WTC11 (cell line): ENCODE measurements at regions of chr7 and their contacts with region 1.

Region 1: GRCh38 chr7:91940572-91941341 is at the start of gene AKAP9:
- DNase-seq: peak; percentile 85
- ATAC-seq: peak; percentile 93
- H3K4me3 Mint-ChIP-seq: peak within 1 kb of the TSS; percentile 85
- H3K27ac Mint-ChIP-seq: peak within 1 kb of the TSS; percentile 97
- H3K4me1 Mint-ChIP-seq: peaks cover 15% of the 10 kb centered on the region
- H3K27me3 Mint-ChIP-seq: peaks cover 41% of the 10 kb centered on the region
- CTCF ChIP-seq: no peak
- total RNA-seq, gene AKAP9: 29.4 to 35.2 TPM (median 32.7 TPM) in 3 replicates

Region 2: GRCh38 chr7:91880413-91881241 is 60.1 kb before region 1 on chr7 and contains the start of gene MTERF1:
- CTCF ChIA-PET with region 1: interaction called, 21 read pairs
- POLR2A ChIA-PET with region 1: no interaction called
- DNase-seq: peak; percentile 94
- ATAC-seq: peak; percentile 98
- H3K4me3 Mint-ChIP-seq: peak within 1 kb of the TSS; percentile 91
- H3K27ac Mint-ChIP-seq: peak within 1 kb of the TSS; percentile 86
- H3K4me1 Mint-ChIP-seq: peaks cover 12% of the 10 kb centered on the region
- H3K27me3 Mint-ChIP-seq: peaks cover 6% of the 10 kb centered on the region
- CTCF ChIP-seq: peak; percentile 78
- total RNA-seq, gene MTERF1: 12.0 to 15.5 TPM (median 12.4 TPM) in 3 replicates